ENCODE measurements at regions of chr16 and their contacts with region 1.

Region 1: GRCh38 chr16:16042076-16042475 is 92.7 kb downstream of the ABCC1 start:
- DNase-seq: peak; percentile 74
- H3K4me3 ChIP-seq: no peak overlapping the region
- H3K27ac ChIP-seq: no peak overlapping the region
- H3K27me3 ChIP-seq: no peaks in the 10 kb centered on the region
- CTCF ChIP-seq: no peak

Region 2: GRCh38 chr16:15881794-15882379 is 160.2 kb before region 1 on chr16:
- CTCF ChIA-PET with region 1: no interaction called
- POLR2A ChIA-PET with region 1: interaction called, 13 read pairs
- DNase-seq: no peak
- H3K4me3 ChIP-seq: no peak overlapping the region
- H3K27ac ChIP-seq: no peak overlapping the region
- H3K27me3 ChIP-seq: no peaks in the 10 kb centered on the region
- CTCF ChIP-seq: no peak

Region 3: DNA sequence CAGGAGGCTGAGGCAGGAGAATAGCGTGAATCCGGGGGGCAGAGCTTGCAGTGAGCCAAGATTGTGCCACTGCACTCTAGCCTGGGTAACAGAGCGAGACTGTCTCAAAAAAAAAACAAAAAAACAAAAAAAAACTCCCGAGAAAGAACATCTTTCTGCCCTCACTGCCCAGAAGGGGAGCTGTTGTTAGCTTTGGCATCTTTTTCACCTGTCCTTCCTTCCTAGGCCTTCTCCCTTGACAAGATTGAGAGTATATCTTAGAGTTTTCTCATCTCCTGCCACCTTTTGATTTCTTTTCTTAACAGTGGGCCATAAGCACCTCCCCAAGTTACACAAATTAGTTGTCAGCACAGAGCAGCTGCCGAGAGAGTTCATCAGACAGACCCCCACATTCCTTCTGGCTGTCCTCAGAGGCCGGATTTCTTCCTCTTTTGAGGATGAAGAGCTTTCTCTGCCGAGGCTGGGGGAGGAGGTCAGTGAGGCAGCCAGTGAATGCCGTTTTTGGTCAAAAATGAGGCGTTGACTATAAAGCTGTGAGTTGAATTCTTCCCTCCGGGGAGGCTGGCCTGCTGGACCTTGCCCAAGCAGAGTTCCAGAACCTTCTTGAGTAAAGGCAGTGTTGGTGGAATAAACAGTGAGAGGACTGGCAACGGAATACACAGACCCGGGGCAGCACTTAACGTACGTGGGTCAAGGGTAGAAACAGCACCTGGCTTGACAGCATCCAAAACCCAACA is 54.2 kb after region 1 on chr16:
- CTCF ChIA-PET with region 1: no interaction called
- POLR2A ChIA-PET with region 1: no interaction called
- DNase-seq: peak; percentile 51
- H3K4me3 ChIP-seq: no peak overlapping the region
- H3K27ac ChIP-seq: peak overlapping the region; percentile 82
- H3K27me3 ChIP-seq: no peaks in the 10 kb centered on the region
- CTCF ChIP-seq: peak; percentile 53

Measured in AG04450 (cell line).